Mammary epithelial cell (primary cell): ENCODE measurements at regions of chr10 and their contacts with region 1.

Region 1: DNA sequence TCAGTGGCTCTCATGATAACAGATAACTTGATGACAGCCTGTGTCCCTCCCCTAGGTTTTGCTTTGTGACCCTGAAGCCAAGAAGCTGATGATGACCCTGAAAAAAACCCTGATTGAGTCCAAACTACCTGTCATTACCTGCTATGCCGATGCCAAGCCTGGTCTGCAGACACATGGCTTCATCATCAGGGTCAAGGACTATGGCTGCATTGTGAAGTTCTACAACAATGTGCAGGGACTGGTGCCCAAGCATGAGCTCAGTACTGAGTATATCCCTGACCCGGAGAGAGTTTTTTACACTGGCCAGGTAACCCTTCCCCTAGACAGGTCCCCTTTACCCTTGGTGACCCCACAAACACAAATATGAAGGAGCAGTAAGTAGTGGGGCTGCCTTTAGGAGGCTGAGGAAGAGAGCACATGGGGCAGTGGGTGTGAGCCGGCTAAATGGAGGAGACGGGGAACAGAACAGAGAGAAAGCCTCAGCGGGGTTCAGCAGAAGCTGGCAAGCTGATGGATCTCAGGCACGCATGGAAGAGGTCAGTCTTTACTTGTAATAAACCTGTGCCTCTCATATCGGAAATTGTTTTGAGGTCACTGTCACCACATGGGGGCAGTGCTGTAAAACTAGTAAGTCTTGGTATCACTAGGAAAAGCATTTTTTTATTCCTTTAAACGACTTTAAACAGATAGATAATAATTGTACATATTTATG is 20.2 kb downstream of the PDCD11 start:
- DNase-seq: peak; percentile 19
- H3K4me3 ChIP-seq: no peak overlapping the region
- H3K27ac ChIP-seq: no peak overlapping the region
- H3K4me1 ChIP-seq: no peaks in the 10 kb centered on the region
- H3K27me3 ChIP-seq: no peaks in the 10 kb centered on the region
- CTCF ChIP-seq: peak; percentile 31 to 54

Region 2: GRCh38 chr10:103470761-103471653 is 54.4 kb after region 1 on chr10:
- CTCF ChIA-PET with region 1: no interaction called
- dilution Hi-C with region 1: loop called (anchors 10 kb)
- in situ Hi-C with region 1: no loop called
- intact Hi-C with region 1: no loop called
- DNase-seq: no peak
- H3K4me3 ChIP-seq: no peak overlapping the region
- H3K27ac ChIP-seq: no peak overlapping the region
- H3K4me1 ChIP-seq: peaks cover 9% of the 10 kb centered on the region
- H3K27me3 ChIP-seq: peaks cover 3% of the 10 kb centered on the region
- CTCF ChIP-seq: no peak

Region 3: DNA sequence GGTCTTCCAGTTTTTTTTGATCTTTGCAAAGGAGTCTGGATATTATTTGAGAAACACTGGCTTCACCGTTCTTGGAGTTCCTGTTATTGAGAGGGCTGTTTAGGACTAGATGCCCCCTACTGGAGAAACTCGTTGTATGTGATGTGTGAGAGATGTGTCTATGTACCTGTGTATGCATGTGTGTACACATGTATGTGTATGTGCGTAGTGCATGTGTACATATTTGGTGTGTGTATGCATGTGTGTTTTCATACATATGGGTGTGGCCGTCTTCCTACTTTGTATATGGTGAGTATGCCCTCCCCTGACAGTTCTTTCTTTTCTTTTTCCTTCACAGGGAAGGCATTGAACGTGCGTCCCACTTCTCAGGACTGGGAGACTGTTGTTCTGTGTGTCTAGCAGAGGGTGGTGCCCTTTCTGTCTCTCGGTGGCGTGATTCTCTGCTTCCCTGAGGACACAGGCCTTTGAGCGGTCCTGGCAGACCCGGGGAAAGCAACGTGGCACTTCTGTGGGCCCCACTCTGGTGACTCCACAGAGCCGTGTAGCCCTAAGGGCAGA is 65.5 kb after region 1 on chr10:
- CTCF ChIA-PET with region 1: no interaction called
- dilution Hi-C with region 1: loop called (anchors 10 kb)
- in situ Hi-C with region 1: no loop called
- intact Hi-C with region 1: loop called (anchors 1 kb)
- DNase-seq: peak; percentile 42
- H3K4me3 ChIP-seq: no peak overlapping the region
- H3K27ac ChIP-seq: no peak overlapping the region
- H3K4me1 ChIP-seq: peaks cover 14% of the 10 kb centered on the region
- H3K27me3 ChIP-seq: no peaks in the 10 kb centered on the region
- CTCF ChIP-seq: peak; percentile 72 to 86

Region 4: GRCh38 chr10:103592186-103593021 is 175.8 kb after region 1 on chr10:
- CTCF ChIA-PET with region 1: no interaction called
- dilution Hi-C with region 1: no loop called
- in situ Hi-C with region 1: no loop called
- intact Hi-C with region 1: loop called (anchors 10 kb)
- DNase-seq: no peak
- H3K4me3 ChIP-seq: no peak overlapping the region
- H3K27ac ChIP-seq: no peak overlapping the region
- H3K4me1 ChIP-seq: no peaks in the 10 kb centered on the region
- H3K27me3 ChIP-seq: no peaks in the 10 kb centered on the region
- CTCF ChIP-seq: peak; percentile 56 to 58

Region 5: DNA sequence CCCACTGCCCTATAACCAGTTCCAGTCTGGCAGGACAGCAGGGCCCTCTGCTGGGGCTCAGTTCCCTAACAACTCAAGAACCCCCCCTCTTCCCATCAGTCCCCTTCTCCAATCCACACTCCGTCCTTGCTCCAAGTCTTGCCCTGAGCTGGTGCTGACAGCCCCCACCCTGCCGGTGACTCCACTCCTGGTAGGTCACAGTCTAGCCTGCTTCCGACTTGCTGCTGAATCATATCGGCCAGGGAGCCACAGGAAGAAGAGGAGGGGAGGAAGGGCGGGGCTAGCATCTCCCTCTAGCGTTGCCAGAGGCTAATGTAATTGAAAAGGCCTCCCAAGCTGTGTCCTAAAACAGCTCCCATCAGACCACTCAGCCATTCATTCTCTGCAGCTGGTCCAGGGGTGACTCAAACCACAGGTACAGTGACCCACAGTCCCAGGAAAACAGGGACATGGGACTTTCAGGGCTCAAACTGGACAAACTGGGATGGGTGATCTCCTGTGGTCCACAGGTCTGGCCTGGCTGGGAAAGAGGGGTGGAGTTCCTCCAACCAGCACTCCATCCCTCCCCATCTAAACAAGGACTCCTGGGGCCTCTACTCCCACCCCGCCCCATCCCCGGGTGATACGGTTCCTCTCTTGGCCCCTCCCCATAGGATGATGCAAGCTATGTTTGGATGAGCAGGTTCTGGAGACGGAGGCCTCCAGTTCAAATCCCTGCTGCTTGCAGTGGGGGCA is 280.0 kb after region 1 on chr10:
- CTCF ChIA-PET with region 1: no interaction called
- dilution Hi-C with region 1: no loop called
- in situ Hi-C with region 1: no loop called
- intact Hi-C with region 1: no loop called
- DNase-seq: peak; percentile 93
- H3K4me3 ChIP-seq: no peak overlapping the region
- H3K27ac ChIP-seq: peak overlapping the region; percentile 41
- H3K4me1 ChIP-seq: peaks cover 62% of the 10 kb centered on the region
- H3K27me3 ChIP-seq: no peaks in the 10 kb centered on the region
- CTCF ChIP-seq: peak; percentile 32 to 41

Region 6: DNA sequence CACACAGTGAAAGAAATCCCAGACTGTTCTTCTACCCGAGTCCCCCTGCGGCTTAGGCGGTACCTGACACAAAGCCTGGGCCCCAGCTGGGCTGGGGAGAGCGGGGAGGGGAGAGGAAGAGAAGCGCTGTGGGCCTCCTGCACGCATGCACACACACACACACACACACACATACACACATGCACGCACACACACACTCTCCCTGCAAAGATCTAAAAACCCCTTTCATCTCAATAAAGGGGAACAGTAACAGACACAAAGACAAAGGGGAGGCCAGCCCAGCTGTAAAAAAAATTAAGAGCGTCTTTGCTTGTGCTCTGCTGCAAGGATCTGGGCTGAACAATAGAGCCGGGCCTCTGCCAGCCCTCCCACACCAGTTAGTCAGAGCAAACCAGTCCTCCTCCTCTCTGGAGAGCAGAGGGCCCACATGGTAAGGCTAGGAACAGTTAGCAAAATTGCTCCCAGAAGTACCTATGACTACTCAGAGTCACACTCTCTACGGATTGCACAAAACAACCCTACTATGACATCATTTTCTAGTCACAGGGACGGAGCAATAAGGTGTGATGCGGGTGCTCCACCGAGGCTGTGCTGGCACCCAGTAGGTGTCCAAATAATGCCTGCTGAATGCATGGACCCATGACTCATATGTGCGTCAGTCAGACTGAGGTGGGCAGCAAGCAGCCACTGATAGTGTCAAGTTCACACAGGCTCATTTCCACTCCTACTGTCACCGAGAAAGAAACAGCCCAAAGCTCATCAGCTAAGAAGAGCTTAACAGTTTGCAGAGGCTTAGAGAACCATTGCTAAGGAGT is 912.5 kb after region 1 on chr10:
- CTCF ChIA-PET with region 1: no interaction called
- dilution Hi-C with region 1: no loop called
- in situ Hi-C with region 1: no loop called
- intact Hi-C with region 1: no loop called
- DNase-seq: peak; percentile 99
- H3K4me3 ChIP-seq: peak overlapping the region in 2 of 3 experiments; percentile 24 to 35
- H3K27ac ChIP-seq: peak overlapping the region; percentile 98
- H3K4me1 ChIP-seq: peaks cover 77% of the 10 kb centered on the region
- H3K27me3 ChIP-seq: no peaks in the 10 kb centered on the region
- CTCF ChIP-seq: no peak